K562 (cell line): ENCODE measurements at regions of chr15 and their contacts with region 1.

Region 1: DNA sequence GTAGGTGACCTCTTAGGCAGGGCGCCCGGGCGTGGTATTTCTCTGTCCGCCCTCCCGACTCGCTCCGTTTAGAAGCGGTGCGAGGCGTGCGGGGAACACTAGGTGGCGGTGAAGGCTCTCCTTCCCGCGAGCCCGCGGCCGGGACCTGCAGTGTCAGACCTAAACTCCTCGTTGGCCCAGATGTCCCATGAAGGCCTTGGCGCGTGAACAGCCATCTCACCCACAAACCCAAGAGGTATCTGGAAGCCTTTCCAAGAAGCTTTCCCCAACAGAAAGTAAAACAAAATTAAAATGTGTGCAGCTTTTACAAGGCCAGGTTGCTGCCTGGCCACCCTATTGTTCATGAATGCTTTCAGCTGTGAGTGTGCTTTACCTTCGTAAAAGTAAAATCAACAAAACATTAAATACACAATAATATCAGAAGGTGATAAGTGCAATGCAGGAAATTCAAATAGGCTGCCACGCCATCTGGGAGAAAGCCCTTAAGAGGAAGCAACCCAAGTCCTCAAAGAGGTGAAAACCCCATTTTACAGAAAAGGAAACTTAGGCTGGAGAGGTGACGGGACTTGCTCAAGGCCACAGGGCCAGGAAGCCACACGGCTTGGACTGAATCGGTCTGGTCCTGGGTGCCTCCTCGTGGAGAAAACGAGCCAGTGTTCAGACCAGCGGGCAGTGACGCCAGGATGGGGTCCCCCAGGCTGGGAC is 120.3 kb downstream of the ETFA start:
- DNase-seq: peak; percentile 86 to 88 (median 86)
- ATAC-seq: peak; percentile 97
- H3K4me3 ChIP-seq: no peak overlapping the region
- H3K27ac ChIP-seq: no peak overlapping the region
- H3K4me1 ChIP-seq: peaks cover 0 to 9% of the 10 kb centered on the region in 2 experiments; a peak in 3 of 5 replicates
- H3K27me3 ChIP-seq: no peaks in the 10 kb centered on the region; a peak in 1 of 5 replicates
- CTCF ChIP-seq: peak; percentile 88 to 92 (median 91)
- EP300 ChIP-seq: no peak
- POLR2A ChIP-seq: no peak
- RAD21 ChIP-seq: peak; percentile 84 to 95

Region 2: DNA sequence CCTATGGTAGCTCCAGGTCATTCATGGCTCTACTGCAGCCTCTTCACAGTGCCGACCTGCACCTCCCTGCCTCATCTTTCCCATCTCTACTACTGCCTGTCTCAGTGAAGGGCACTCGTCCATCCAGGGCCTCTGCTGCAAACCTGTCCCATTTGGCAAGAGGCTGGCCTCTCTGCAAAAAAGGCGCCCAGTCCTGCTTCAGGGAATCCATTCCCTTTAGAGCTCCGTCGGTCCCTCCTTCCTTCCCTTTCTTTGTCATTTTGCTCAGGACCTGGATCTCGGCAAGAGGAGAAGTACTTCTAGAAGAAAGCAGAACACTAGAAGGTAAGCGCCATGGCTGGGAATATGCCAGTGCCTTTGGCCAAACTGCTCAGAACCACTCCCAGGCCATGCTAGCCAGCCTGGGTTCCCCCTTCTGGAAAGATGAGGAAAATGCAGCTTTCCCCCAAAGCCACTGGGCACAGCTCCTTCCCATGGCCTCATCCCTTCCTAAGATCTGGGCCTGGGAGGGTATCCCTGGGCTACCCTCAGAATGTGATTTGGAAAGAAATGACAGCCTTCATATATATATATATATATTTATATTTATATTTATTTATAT is 139.2 kb after region 1 on chr15:
- CTCF ChIA-PET with region 1: interaction called, 7 read pairs
- POLR2A ChIA-PET with region 1: interaction called, 5 read pairs
- in situ Hi-C with region 1: no loop called
- intact Hi-C with region 1: loop called (anchors 1 kb)
- DNase-seq: peak in 3 of 4 experiments; percentile 28 to 58 (median 51)
- ATAC-seq: peak; percentile 76
- H3K4me3 ChIP-seq: no peak overlapping the region
- H3K27ac ChIP-seq: no peak overlapping the region
- H3K4me1 ChIP-seq: peaks cover 15 to 16% of the 10 kb centered on the region in 2 experiments; a peak in 4 of 5 replicates
- H3K27me3 ChIP-seq: no peaks in the 10 kb centered on the region
- CTCF ChIP-seq: peak; percentile 60 to 68 (median 67)
- EP300 ChIP-seq: no peak
- POLR2A ChIP-seq: no peak
- RAD21 ChIP-seq: peak; percentile 20 to 58; a peak in 2 of 4 replicates

Region 3: DNA sequence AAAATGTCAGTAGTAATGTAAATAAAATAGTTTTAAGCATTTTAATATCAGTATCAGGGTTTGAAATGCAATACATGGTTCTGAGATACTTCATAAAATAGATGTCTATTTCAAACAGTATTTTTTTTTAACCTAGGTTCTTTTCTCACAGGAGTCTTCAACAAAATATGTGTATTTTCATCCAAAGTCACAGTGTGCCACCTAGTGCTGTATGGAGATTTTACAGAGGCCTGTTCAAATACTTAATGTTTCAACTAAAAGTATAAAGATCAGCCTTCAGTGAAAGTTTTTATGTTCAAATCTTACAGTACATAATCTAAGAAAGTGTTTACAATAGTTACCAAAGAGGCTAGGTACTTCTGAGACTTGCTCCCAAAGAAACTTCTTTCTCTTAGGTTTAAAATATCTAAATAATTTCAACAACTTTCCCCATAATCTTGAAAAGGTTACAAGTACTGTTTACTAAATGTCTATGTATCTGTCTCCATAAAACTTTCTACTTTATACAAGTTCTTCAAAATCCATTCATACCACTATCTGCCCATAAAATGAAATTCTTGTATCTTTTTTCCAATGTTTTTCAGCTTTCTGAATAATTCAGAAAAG is 675.8 kb after region 1 on chr15:
- CTCF ChIA-PET with region 1: interaction called, 9 read pairs
- POLR2A ChIA-PET with region 1: interaction called, 3 read pairs
- in situ Hi-C with region 1: no loop called
- intact Hi-C with region 1: loop called (anchors 2 kb)
- DNase-seq: peak in 3 of 4 experiments; percentile 9 to 31 (median 10)
- ATAC-seq: peak; percentile 57; the same call in 1 of the 3 replicates
- H3K4me3 ChIP-seq: no peak overlapping the region
- H3K27ac ChIP-seq: no peak overlapping the region
- H3K4me1 ChIP-seq: no peaks in the 10 kb centered on the region
- H3K27me3 ChIP-seq: no peaks in the 10 kb centered on the region
- CTCF ChIP-seq: peak; percentile 30 to 67 (median 33); a peak in 3 of 6 replicates
- EP300 ChIP-seq: no peak
- POLR2A ChIP-seq: no peak
- RAD21 ChIP-seq: peak; percentile 73